ENCODE measurements at regions of chr9 and their contacts with region 1.

Region 1: GRCh38 chr9:132240753-132241493 is 79.1 kb downstream of the NTNG2 start:
- DNase-seq: peak; percentile 99 to 100 (median 99)
- H3K4me3 ChIP-seq: peak overlapping the region; percentile 23 to 85
- H3K4me3 Mint-ChIP-seq: peak overlapping the region; percentile 90 to 99 (median 98)
- H3K27ac ChIP-seq: peak overlapping the region; percentile 42
- H3K27ac Mint-ChIP-seq: peak overlapping the region; percentile 78 to 97 (median 94)
- H3K4me1 ChIP-seq: peaks cover 22% of the 10 kb centered on the region
- H3K4me1 Mint-ChIP-seq: peaks cover 7 to 27% (median 16%) of the 10 kb centered on the region in 4 donors
- H3K27me3 ChIP-seq: no peaks in the 10 kb centered on the region
- H3K27me3 Mint-ChIP-seq: peaks cover 3% of the 10 kb centered on the region in 2 donors

Region 2: GRCh38 chr9:131755541-131756198 is 485.3 kb before region 1 on chr9:
- CTCF ChIA-PET with region 1: interaction called, 124 read pairs
- POLR2A ChIA-PET with region 1: no interaction called
- intact Hi-C with region 1: no loop called
- DNase-seq: peak; percentile 80 to 82 (median 80)
- H3K4me3 ChIP-seq: no peak overlapping the region
- H3K4me3 Mint-ChIP-seq: peak overlapping the region in 2 of 8 donors; percentile 53 to 70
- H3K27ac ChIP-seq: no peak overlapping the region
- H3K27ac Mint-ChIP-seq: peak overlapping the region in 5 of 7 donors; percentile 2 to 94 (median 18)
- H3K4me1 ChIP-seq: peaks cover 6% of the 10 kb centered on the region
- H3K4me1 Mint-ChIP-seq: peaks cover 4 to 6% (median 6%) of the 10 kb centered on the region in 4 donors
- H3K27me3 ChIP-seq: no peaks in the 10 kb centered on the region
- H3K27me3 Mint-ChIP-seq: peaks cover 4% of the 10 kb centered on the region in 2 donors

Region 3: GRCh38 chr9:132079391-132080091 is 161.4 kb before region 1 on chr9 and contains the start of gene MED27:
- CTCF ChIA-PET with region 1: interaction called, 4 read pairs
- POLR2A ChIA-PET with region 1: no interaction called
- intact Hi-C with region 1: loop called (anchors 1 kb)
- DNase-seq: peak; percentile 88 to 96 (median 89)
- H3K4me3 ChIP-seq: peak within 1 kb of the TSS; percentile 89 to 93
- H3K4me3 Mint-ChIP-seq: peak within 1 kb of the TSS; percentile 89 to 99 (median 98)
- H3K27ac ChIP-seq: peak within 1 kb of the TSS; percentile 70
- H3K27ac Mint-ChIP-seq: peak within 1 kb of the TSS; percentile 86 to 98 (median 94)
- H3K4me1 ChIP-seq: peaks cover 40% of the 10 kb centered on the region
- H3K4me1 Mint-ChIP-seq: peaks cover 30 to 45% (median 38%) of the 10 kb centered on the region in 4 donors
- H3K27me3 ChIP-seq: no peaks in the 10 kb centered on the region
- H3K27me3 Mint-ChIP-seq: peaks cover 0 to 4% of the 10 kb centered on the region in 2 donors
- total RNA-seq, gene MED27: 15.6 to 15.8 TPM

Region 4: DNA sequence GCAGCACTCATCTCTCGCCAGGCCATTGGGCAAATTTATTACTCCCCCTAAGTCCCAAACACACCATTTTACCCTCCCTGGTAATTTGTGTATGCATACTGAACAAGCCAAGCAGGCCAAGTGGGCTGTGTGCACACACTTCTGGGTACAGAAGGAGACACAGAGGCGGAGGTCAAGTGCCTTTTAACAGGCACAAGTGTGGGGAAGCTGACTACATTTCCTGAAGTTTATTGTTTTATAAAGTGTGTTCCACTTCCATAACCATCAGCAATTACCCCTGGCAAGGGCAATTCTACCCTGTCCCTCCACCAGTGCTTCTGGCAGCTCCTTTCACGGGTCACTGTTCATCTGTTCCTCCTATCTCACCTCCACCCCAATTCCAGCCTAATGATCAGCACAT is 19.9 kb after region 1 on chr9:
- CTCF ChIA-PET with region 1: interaction called, 78 read pairs
- POLR2A ChIA-PET with region 1: interaction called, 4 read pairs
- intact Hi-C with region 1: loop called (anchors 1 kb)
- DNase-seq: no peak
- H3K4me3 ChIP-seq: no peak overlapping the region
- H3K4me3 Mint-ChIP-seq: no peak overlapping the region
- H3K27ac ChIP-seq: no peak overlapping the region
- H3K27ac Mint-ChIP-seq: peak overlapping the region in 1 of 7 donors; percentile 43
- H3K4me1 ChIP-seq: peaks cover 9% of the 10 kb centered on the region
- H3K4me1 Mint-ChIP-seq: peaks cover 4 to 19% (median 6%) of the 10 kb centered on the region in 4 donors
- H3K27me3 ChIP-seq: no peaks in the 10 kb centered on the region
- H3K27me3 Mint-ChIP-seq: no peaks in the 10 kb centered on the region

Region 5: GRCh38 chr9:132354637-132355355 is 113.9 kb after region 1 on chr9 and contains the start of gene SETX:
- CTCF ChIA-PET with region 1: interaction called, 3 read pairs
- POLR2A ChIA-PET with region 1: interaction called, 15 read pairs
- intact Hi-C with region 1: loop called (anchors 5 kb)
- DNase-seq: peak; percentile 89 to 93 (median 91)
- H3K4me3 ChIP-seq: peak within 1 kb of the TSS; percentile 66 to 86
- H3K4me3 Mint-ChIP-seq: peak within 1 kb of the TSS; percentile 91 to 95 (median 93)
- H3K27ac ChIP-seq: peak within 1 kb of the TSS; percentile 95
- H3K27ac Mint-ChIP-seq: peak within 1 kb of the TSS; percentile 92 to 100 (median 96)
- H3K4me1 ChIP-seq: peaks cover 38% of the 10 kb centered on the region
- H3K4me1 Mint-ChIP-seq: peaks cover 30 to 53% (median 38%) of the 10 kb centered on the region in 4 donors
- H3K27me3 ChIP-seq: no peaks in the 10 kb centered on the region
- H3K27me3 Mint-ChIP-seq: no peaks in the 10 kb centered on the region
- total RNA-seq, gene SETX: 91.3 to 94.3 TPM

Region 6: GRCh38 chr9:132424857-132425686 is 184.1 kb after region 1 on chr9:
- CTCF ChIA-PET with region 1: no interaction called
- POLR2A ChIA-PET with region 1: no interaction called
- intact Hi-C with region 1: no loop called
- DNase-seq: no peak
- H3K4me3 ChIP-seq: no peak overlapping the region
- H3K4me3 Mint-ChIP-seq: no peak overlapping the region
- H3K27ac ChIP-seq: no peak overlapping the region
- H3K27ac Mint-ChIP-seq: peak overlapping the region in 1 of 7 donors; percentile 53
- H3K4me1 ChIP-seq: no peaks in the 10 kb centered on the region
- H3K4me1 Mint-ChIP-seq: no peaks in the 10 kb centered on the region
- H3K27me3 ChIP-seq: peaks cover 5% of the 10 kb centered on the region
- H3K27me3 Mint-ChIP-seq: peaks cover 24 to 51% of the 10 kb centered on the region in 2 donors

Measured in CD4-positive, alpha-beta memory T cell (primary cell).